Mammary epithelial cell (primary cell): ENCODE measurements at regions of chr3 and their contacts with region 1.

Region 1: DNA sequence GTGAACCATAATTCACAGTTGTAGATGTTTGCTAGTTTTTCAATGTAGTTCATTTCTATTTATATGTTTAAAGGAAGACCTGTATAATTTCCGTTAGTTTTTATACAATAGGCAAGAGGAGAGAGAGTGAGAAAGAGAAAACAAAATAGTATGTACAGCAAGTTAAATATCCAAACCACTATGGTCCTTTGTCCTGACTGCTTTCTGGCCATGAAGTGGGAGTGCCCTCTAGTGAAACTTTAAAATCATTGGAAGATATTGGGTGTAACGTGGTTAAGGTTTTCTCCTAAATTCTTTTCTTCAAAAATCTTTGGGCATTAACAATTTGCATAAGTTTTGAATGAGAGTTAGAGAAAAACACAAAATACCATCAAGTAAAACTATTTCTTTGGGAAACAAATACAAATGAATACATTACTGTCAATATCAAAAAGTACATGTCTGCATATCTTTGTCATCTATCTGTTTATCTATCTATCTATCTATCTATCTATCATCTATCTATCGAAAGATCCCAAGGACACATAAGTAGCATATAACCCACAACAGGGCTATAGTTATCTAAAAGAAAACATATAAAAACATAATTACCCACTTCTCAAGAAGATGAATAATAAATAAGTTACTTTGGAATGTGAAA is 534.6 kb upstream of the ATP11B start:
- DNase-seq: peak; percentile 31
- H3K4me3 ChIP-seq: no peak overlapping the region
- H3K27ac ChIP-seq: no peak overlapping the region
- H3K4me1 ChIP-seq: peaks cover 3% of the 10 kb centered on the region
- H3K27me3 ChIP-seq: no peaks in the 10 kb centered on the region
- CTCF ChIP-seq: peak; percentile 59 to 83

Region 2: DNA sequence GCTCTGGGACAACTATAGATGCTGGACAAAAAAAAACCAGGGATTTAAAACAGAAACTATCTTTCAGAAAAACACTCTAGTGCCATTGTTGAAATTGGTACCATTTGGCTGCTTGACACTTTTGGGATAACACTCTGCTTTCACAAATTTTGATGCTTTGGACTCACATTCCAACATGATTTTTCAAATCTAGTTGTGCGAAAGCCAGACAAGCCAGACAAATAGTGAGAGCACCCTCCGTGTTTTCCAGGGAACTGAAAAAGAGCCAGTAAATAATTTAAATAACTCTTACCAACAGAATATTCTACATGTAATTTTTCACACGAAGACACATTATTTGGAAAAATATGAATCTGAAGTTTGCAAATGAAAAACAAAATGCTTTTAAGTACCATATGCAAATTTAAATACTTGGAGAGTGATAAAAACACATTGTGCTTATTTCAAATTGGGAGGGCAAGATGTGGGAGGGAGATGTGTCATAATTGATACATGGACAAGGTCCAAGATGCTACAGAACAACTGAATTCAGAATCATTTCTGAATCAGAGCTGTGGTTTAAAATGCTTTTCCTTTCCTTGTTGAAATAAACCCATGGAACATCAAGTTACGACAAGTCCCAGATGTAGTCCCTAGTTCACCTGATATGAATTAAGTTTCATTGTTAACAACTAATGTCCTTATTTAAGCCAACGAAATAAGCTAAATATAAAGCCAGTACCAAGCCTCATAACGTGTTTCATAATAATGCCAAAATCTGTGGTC is 691.2 kb before region 1 on chr3:
- CTCF ChIA-PET with region 1: no interaction called
- dilution Hi-C with region 1: no loop called
- in situ Hi-C with region 1: no loop called
- intact Hi-C with region 1: loop called (anchors 10 kb)
- DNase-seq: peak; percentile 93
- H3K4me3 ChIP-seq: peak overlapping the region in 2 of 3 experiments; percentile 8 to 24
- H3K27ac ChIP-seq: peak overlapping the region; percentile 70
- H3K4me1 ChIP-seq: peaks cover 23% of the 10 kb centered on the region
- H3K27me3 ChIP-seq: no peaks in the 10 kb centered on the region
- CTCF ChIP-seq: no peak

Region 3: DNA sequence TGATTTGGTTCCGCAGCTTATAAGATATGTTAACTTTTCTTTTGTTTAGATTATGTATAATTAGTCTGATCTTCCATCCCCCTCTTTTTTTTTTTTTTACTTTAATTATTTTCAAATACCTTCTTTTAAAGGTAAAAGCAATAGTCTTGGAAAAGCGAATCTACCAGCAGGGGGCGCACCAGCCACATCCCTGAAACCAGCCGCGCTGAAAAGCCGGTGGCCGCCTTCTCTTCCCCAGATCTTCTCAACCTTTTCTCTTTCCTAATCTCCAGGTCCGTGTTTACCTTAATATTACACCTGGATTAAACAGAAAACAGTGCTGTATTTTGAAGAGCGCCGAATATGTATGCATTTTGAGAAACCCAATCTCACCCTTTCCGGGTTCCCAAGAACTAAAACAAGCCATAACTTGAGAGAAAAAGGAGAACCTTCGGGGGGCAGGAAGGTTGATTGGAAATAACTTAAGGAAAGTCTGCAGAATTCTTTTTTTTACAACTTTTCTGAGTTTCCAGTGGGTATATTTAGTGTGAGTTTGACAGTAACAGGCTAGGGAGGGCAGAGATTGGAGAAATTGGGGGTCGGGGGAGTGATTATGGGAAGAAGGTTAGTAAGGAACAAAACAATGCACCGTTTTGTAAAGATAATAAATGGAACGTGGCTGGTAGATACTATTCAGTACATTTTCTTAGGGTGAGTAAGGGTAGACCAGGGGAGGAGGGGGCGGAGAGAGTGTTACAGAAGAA is 549.0 kb before region 1 on chr3:
- CTCF ChIA-PET with region 1: no interaction called
- dilution Hi-C with region 1: no loop called
- in situ Hi-C with region 1: loop called (anchors 10 to 25 kb)
- intact Hi-C with region 1: loop called (anchors 1 kb)
- DNase-seq: peak; percentile 40
- H3K4me3 ChIP-seq: peak overlapping the region in 2 of 3 experiments; percentile 26 to 33
- H3K27ac ChIP-seq: no peak overlapping the region
- H3K4me1 ChIP-seq: peaks cover 15% of the 10 kb centered on the region
- H3K27me3 ChIP-seq: peaks cover 58% of the 10 kb centered on the region
- CTCF ChIP-seq: peak; percentile 53 to 66

Region 4: GRCh38 chr3:181948286-181948685 is 310.4 kb before region 1 on chr3:
- CTCF ChIA-PET with region 1: no interaction called
- dilution Hi-C with region 1: no loop called
- in situ Hi-C with region 1: loop called (anchors 10 kb)
- intact Hi-C with region 1: loop called (anchors 1 kb)
- DNase-seq: peak; percentile 11
- H3K4me3 ChIP-seq: no peak overlapping the region
- H3K27ac ChIP-seq: no peak overlapping the region
- H3K4me1 ChIP-seq: no peaks in the 10 kb centered on the region
- H3K27me3 ChIP-seq: no peaks in the 10 kb centered on the region
- CTCF ChIP-seq: peak; percentile 47 to 92

Region 5: DNA sequence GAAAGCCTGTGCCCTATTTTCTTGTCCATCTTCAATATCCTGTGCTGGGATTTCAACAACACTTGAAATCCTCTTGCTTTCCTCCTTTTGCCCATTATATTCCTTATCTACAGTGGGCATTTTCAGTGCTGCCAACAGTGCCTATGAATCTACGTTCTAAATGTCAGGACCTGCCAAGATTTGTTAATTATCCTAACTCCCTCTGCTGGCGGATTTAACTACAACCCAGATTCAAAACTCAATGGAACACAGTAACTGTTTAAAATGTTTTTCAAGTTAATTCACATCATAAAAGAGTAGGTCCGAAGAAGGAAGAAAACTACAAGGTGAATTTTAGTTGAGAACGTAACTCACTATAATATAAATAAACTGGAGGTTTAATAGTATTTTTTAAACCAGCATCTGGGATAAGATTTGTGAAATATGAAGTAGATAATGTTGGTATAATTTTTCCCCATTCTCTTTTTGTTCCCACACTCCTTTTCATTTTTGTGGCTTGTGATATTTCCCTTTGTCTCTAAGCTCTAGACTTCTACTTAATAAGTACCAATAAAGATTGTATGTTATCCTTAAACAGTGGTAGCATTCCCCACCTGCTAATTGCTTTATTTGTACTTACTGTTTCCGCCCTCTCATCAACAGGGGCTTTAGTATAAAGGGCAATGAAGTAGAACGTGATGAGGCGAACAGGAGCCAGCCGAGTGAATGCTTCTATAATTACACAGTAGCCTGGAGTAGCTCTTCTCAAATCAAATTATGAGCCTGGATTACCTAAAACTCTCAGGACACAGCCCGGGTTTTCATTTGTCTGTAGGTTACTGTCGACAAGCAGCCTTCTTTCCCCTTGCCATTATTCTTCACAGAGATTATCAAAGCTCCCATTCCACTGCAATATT is 232.2 kb after region 1 on chr3:
- CTCF ChIA-PET with region 1: no interaction called
- dilution Hi-C with region 1: no loop called
- in situ Hi-C with region 1: no loop called
- intact Hi-C with region 1: loop called (anchors 2 kb)
- DNase-seq: peak; percentile 31
- H3K4me3 ChIP-seq: no peak overlapping the region
- H3K27ac ChIP-seq: no peak overlapping the region
- H3K4me1 ChIP-seq: no peaks in the 10 kb centered on the region
- H3K27me3 ChIP-seq: no peaks in the 10 kb centered on the region
- CTCF ChIP-seq: peak; percentile 52 to 63